Dendritic cell treated with granulocyte-macrophage colony-stimulating factor and Interleukin-4, amounts not matched to agents 40 ng/mL and 50 ng/mL, for 4 days (primary cell): ENCODE measurements at regions of chr6 and their contacts with region 1.

Region 1: DNA sequence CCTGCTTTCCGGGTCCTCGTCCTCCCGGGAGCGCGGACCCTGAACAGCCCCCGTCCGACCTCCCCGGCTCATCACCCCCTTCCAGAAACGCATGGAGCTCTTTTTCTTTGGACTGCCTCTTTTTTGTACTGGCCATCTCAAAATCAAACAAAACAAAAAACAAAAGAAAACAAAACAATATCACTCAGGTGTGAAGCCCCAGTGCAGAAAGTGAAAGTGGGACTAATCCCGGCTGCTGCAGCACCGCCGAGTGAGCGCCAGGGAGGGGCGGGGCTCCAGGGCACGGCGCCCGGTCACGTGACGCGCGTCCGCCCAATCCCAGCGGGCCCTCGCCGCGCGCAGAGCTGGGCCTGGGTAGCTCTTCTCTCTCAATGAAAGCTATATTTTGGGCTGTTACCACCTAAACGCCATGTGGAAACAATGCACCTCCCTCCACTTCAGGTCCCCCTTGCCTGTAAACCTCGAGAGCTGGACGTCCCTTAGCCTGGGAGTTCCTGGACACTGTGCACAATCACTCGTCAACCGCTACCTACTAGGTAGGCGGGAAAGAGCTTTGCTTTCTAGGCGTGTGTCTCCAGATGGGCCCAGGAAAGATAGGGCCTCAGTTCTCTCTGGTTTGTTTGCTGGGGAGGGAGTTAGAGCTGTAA is 93.7 kb upstream of the PRDM1 start:
- H3K4me3 Mint-ChIP-seq: peak overlapping the region; percentile 93
- H3K27ac Mint-ChIP-seq: peak overlapping the region; percentile 93
- H3K4me1 Mint-ChIP-seq: peaks cover 51% of the 10 kb centered on the region
- H3K27me3 Mint-ChIP-seq: peaks cover 15% of the 10 kb centered on the region

Region 2: GRCh38 chr6:105500693-105501092 is 491.7 kb before region 1 on chr6:
- intact Hi-C with region 1: no loop called
- H3K4me3 Mint-ChIP-seq: no peak overlapping the region
- H3K27ac Mint-ChIP-seq: no peak overlapping the region
- H3K4me1 Mint-ChIP-seq: no peaks in the 10 kb centered on the region
- H3K27me3 Mint-ChIP-seq: peaks cover 1% of the 10 kb centered on the region

Region 3: DNA sequence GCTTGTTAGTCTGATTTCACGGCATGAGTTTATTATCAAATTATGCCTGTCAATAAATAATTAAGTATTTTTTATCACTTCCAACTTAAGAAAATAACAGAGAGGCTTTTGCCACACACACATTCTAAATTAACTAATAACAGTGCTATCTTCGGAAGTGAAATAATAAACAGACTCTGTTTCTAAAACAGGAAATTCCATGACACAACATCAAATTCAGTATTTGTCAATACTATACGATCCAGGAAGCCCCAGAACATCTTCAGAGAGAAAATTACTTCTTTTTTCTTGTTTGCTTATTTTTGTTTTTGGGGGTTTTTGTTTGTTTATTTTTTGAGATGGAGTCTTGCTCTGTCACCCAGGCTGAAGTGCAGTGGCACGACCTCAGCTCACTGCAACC is 57.0 kb before region 1 on chr6:
- intact Hi-C with region 1: loop called (anchors 5 kb)
- H3K4me3 Mint-ChIP-seq: no peak overlapping the region
- H3K27ac Mint-ChIP-seq: peak overlapping the region; percentile 52
- H3K4me1 Mint-ChIP-seq: peaks cover 26% of the 10 kb centered on the region
- H3K27me3 Mint-ChIP-seq: no peaks in the 10 kb centered on the region

Region 4: GRCh38 chr6:106163446-106163965 is 171.1 kb after region 1 on chr6:
- intact Hi-C with region 1: loop called (anchors 5 kb)
- H3K4me3 Mint-ChIP-seq: peak overlapping the region; percentile 45
- H3K27ac Mint-ChIP-seq: peak overlapping the region; percentile 95
- H3K4me1 Mint-ChIP-seq: peaks cover 57% of the 10 kb centered on the region
- H3K27me3 Mint-ChIP-seq: no peaks in the 10 kb centered on the region